Endothelial cell of umbilical vein (primary cell): ENCODE measurements at regions of chr7 and their contacts with region 1.

Region 1: GRCh38 chr7:29878081-29878688 is 71.9 kb downstream of the WIPF3 start:
- DNase-seq: peak; percentile 74
- H3K4me3 ChIP-seq: no peak overlapping the region
- H3K27ac ChIP-seq: no peak overlapping the region
- H3K4me1 ChIP-seq: peaks cover 2% of the 10 kb centered on the region
- H3K27me3 ChIP-seq: peaks cover 5% of the 10 kb centered on the region in 2 experiments
- CTCF ChIP-seq: peak; percentile 50 to 58
- POLR2A ChIP-seq: no peak

Region 2: GRCh38 chr7:29866490-29866930 is 11.7 kb before region 1 on chr7:
- CTCF ChIA-PET with region 1: interaction called, 15 read pairs
- POLR2A ChIA-PET with region 1: no interaction called
- dilution Hi-C with region 1: no loop called
- intact Hi-C with region 1: no loop called
- DNase-seq: peak; percentile 69
- H3K4me3 ChIP-seq: no peak overlapping the region
- H3K27ac ChIP-seq: no peak overlapping the region
- H3K4me1 ChIP-seq: peaks cover 18% of the 10 kb centered on the region
- H3K27me3 ChIP-seq: peaks cover 2 to 3% of the 10 kb centered on the region in 2 experiments
- CTCF ChIP-seq: no peak
- POLR2A ChIP-seq: no peak

Region 3: DNA sequence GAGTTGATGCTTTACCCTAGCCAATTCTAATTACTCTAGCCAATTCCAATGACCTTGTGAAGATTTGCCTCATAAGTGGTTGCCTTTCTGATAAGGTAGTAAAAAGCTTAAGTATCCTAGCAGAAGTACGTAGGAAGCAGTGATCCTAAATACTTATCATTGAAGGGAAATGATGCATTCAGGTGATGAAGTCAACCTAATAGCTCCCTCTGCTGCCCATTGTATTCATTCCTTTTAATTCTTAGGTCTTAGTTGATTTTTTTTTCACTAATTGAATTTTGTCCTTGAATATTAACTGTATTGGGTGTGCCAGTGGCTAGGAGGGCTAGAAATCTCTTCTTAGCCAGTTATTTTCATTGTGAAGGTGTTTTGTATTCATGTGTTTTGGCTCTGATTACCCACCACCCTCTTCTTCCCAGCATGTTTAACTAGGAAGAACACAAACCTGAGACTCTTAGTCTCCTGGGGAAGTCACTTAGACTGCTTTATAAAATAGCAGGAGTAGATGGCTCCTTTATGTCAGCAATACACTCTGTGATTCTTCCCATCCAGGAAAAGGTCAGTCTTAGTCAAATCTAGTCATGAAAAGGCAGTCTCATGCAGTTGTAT is 196.3 kb after region 1 on chr7:
- CTCF ChIA-PET with region 1: interaction called, 35 read pairs
- POLR2A ChIA-PET with region 1: no interaction called
- dilution Hi-C with region 1: no loop called
- intact Hi-C with region 1: loop called (anchors 1 kb)
- DNase-seq: peak; percentile 52
- H3K4me3 ChIP-seq: no peak overlapping the region
- H3K27ac ChIP-seq: no peak overlapping the region
- H3K4me1 ChIP-seq: no peaks in the 10 kb centered on the region
- H3K27me3 ChIP-seq: no peaks in the 10 kb centered on the region
- CTCF ChIP-seq: peak; percentile 25 to 38
- POLR2A ChIP-seq: no peak

Region 4: DNA sequence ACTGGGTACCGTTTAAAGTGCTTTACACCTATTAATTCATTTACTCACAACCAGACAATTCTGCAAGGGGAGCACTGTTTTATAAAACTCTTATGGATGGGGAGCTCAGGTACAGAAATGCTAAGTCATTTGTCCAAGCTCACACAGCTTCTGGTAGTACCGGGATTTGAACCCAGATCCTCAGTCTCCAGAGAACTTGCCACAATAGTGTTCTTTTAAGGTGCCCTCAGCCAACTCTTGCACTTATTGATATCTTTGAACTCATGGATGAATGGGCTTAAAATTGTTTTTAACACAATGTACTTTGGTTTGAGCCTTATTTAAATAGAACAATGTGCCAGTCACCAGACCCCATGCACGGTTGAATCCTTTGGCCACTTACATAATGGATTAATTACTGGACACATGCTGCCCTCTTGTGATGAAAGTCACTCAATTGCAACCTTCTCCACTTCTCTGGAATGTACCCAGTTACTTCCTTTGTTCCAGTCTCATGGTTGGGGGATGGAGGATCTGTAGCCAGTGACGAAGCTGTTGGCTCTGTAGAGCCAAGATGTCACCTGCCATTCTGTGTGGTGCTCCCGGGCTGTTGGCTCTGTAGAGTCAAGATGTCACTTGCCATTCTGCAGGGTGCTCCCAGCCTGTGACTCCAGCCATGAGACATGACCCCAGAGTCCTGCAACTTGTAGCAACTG is 534.8 kb after region 1 on chr7:
- CTCF ChIA-PET with region 1: interaction called, 5 read pairs
- POLR2A ChIA-PET with region 1: no interaction called
- dilution Hi-C with region 1: no loop called
- intact Hi-C with region 1: loop called (anchors 2 kb)
- DNase-seq: peak; percentile 90
- H3K4me3 ChIP-seq: no peak overlapping the region
- H3K27ac ChIP-seq: no peak overlapping the region
- H3K4me1 ChIP-seq: no peaks in the 10 kb centered on the region
- H3K27me3 ChIP-seq: no peaks in the 10 kb centered on the region
- CTCF ChIP-seq: peak; percentile 57 to 62
- POLR2A ChIP-seq: no peak